Endothelial cell of umbilical vein (primary cell): ENCODE measurements at regions of chr1 and their contacts with region 1.

Region 1: GRCh38 chr1:205485338-205486228 is 18.9 kb upstream of the CDK18 start:
- DNase-seq: peak; percentile 55
- H3K4me3 ChIP-seq: no peak overlapping the region
- H3K27ac ChIP-seq: no peak overlapping the region
- H3K4me1 ChIP-seq: no peaks in the 10 kb centered on the region
- H3K27me3 ChIP-seq: peaks cover 7 to 13% of the 10 kb centered on the region in 2 experiments
- CTCF ChIP-seq: peak; percentile 85 to 96
- POLR2A ChIP-seq: no peak

Region 2: GRCh38 chr1:205300886-205301821 is 184.4 kb before region 1 on chr1:
- CTCF ChIA-PET with region 1: no interaction called
- POLR2A ChIA-PET with region 1: no interaction called
- dilution Hi-C with region 1: no loop called
- intact Hi-C with region 1: no loop called
- DNase-seq: peak; percentile 62
- H3K4me3 ChIP-seq: no peak overlapping the region
- H3K27ac ChIP-seq: no peak overlapping the region
- H3K4me1 ChIP-seq: peaks cover 17% of the 10 kb centered on the region
- H3K27me3 ChIP-seq: no peaks in the 10 kb centered on the region
- CTCF ChIP-seq: no peak
- POLR2A ChIP-seq: no peak

Region 3: DNA sequence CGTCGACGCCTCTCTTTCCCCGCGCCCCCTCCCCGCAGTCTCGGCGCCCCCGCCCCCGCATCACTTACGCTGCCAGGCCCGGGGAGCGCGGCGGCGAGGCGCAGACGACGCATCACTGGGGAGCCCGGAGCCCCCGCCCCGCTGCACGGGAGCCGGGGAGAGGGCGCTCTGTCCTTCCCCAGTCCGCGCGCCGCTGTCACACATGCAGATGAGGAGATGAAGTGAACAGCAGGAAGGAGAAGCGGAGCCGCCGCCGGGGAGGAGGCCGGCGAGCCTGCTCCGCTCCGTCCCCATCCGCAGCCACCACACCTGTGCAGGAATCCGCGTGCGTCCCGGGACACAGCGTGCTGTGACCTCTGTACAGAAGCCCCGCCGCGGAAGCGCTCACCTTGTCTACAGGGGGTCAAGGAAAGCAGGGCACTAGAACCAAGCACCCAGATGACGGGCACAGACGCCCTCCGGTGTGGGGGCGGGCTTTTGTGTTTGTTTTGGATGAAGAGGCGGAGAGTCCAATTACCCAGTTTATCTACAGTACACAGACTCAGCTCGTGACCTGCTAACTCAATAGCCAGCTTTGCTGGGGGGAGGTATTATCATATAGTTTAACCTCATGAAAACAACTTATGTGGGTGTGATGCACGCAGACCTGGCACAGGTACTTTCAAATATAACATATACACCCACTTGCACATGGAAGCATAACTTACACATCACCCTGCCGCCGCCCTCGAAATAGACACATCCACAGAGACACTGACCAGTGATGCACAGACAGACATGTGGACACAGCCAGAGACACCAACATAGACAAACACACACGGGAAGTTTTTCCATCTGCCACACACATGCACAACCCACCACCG is 141.3 kb before region 1 on chr1:
- CTCF ChIA-PET with region 1: interaction called, 23 read pairs
- POLR2A ChIA-PET with region 1: no interaction called
- dilution Hi-C with region 1: no loop called
- intact Hi-C with region 1: no loop called
- DNase-seq: no peak
- H3K4me3 ChIP-seq: no peak overlapping the region
- H3K27ac ChIP-seq: no peak overlapping the region
- H3K4me1 ChIP-seq: no peaks in the 10 kb centered on the region
- H3K27me3 ChIP-seq: peaks cover 53 to 70% of the 10 kb centered on the region in 2 experiments
- CTCF ChIP-seq: no peak
- POLR2A ChIP-seq: no peak

Region 4: DNA sequence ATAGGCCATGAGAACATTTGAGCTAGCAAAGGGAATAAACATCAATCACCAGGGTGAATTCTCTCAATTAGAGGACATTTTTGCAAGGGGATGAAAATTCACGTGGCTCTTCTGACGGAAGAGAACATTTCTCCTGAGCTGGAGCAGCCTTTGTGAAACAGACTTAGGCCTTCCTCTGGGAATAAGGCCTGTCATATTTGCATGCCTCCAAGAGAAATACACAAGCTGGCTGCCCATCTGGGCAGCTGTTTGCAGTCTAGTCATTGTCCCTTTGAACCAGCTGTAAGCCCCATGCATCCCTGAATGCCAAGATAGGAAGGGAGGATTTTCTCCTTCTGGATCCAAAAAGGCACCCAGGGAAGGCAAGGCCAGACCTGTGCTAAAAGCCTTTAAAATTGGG is 69.3 kb before region 1 on chr1:
- CTCF ChIA-PET with region 1: interaction called, 38 read pairs
- POLR2A ChIA-PET with region 1: no interaction called
- dilution Hi-C with region 1: no loop called
- intact Hi-C with region 1: no loop called
- DNase-seq: no peak
- H3K4me3 ChIP-seq: no peak overlapping the region
- H3K27ac ChIP-seq: no peak overlapping the region
- H3K4me1 ChIP-seq: no peaks in the 10 kb centered on the region
- H3K27me3 ChIP-seq: peaks cover 13 to 17% of the 10 kb centered on the region in 2 experiments
- CTCF ChIP-seq: no peak
- POLR2A ChIP-seq: no peak

Region 5: DNA sequence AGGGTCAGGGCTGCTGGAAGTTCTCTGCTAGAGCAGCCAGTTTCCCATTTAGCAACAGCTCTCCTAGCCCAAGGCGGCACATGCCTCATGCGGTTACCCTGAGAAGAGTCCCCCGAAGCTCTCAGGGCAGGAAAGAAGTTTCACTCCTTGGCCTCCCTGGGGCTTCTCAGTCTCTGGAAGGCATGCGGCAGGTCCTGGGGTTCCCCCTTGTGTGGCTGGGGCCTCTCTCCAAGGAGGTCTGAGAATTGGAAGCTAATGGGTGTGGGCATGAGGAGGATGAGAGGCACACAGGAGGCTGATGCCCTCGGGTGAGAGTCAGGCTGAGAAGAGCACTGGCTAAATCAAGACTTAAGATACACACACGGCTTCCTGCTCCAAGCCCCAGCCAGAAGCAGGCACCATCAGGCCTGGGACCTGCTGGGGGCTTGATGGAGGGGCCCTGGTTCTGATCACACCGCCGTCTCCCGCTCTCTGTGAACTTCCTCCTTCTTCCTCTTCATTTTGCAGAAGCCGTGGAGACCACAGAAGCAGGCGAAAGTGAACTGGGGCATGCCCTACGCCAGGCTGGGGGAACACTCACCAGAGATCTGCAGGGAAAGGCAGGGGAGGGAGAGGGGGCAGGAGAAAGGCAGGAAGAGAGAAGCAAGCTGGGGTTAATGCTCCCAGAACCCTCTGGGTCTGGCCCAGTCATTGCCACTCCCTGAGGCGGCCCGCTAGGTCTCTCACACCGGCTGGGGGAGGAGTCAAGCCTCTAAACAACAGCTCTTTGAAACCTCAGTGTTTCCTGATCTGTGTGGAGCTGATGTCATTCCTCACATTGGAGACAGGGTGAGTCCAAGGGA is 44.9 kb before region 1 on chr1:
- CTCF ChIA-PET with region 1: interaction called, 21 read pairs
- POLR2A ChIA-PET with region 1: no interaction called
- dilution Hi-C with region 1: no loop called
- intact Hi-C with region 1: no loop called
- DNase-seq: no peak
- H3K4me3 ChIP-seq: no peak overlapping the region
- H3K27ac ChIP-seq: no peak overlapping the region
- H3K4me1 ChIP-seq: peaks cover 2% of the 10 kb centered on the region
- H3K27me3 ChIP-seq: peaks cover 18% of the 10 kb centered on the region in 2 experiments
- CTCF ChIP-seq: no peak
- POLR2A ChIP-seq: no peak

Region 6: GRCh38 chr1:205512059-205513045 is 26.8 kb after region 1 on chr1:
- CTCF ChIA-PET with region 1: interaction called, 24 read pairs
- POLR2A ChIA-PET with region 1: no interaction called
- dilution Hi-C with region 1: no loop called
- intact Hi-C with region 1: no loop called
- DNase-seq: no peak
- H3K4me3 ChIP-seq: no peak overlapping the region
- H3K27ac ChIP-seq: no peak overlapping the region
- H3K4me1 ChIP-seq: no peaks in the 10 kb centered on the region
- H3K27me3 ChIP-seq: peaks cover 2% of the 10 kb centered on the region in 2 experiments
- CTCF ChIP-seq: no peak
- POLR2A ChIP-seq: no peak

Region 7: GRCh38 chr1:205791568-205792180 is 306.1 kb after region 1 on chr1:
- CTCF ChIA-PET with region 1: no interaction called
- POLR2A ChIA-PET with region 1: no interaction called
- dilution Hi-C with region 1: no loop called
- intact Hi-C with region 1: no loop called
- DNase-seq: peak; percentile 53
- H3K4me3 ChIP-seq: no peak overlapping the region
- H3K27ac ChIP-seq: no peak overlapping the region
- H3K4me1 ChIP-seq: no peaks in the 10 kb centered on the region
- H3K27me3 ChIP-seq: no peaks in the 10 kb centered on the region
- CTCF ChIP-seq: peak; percentile 71 to 86
- POLR2A ChIP-seq: no peak